Mammary epithelial cell (primary cell): ENCODE measurements at regions of chr17 and their contacts with region 1.

Region 1: GRCh38 chr17:78736526-78737079 is 45.5 kb downstream of the CYTH1 start:
- DNase-seq: peak; percentile 93
- H3K4me3 ChIP-seq: peak overlapping the region; percentile 56 to 76 (median 56)
- H3K27ac ChIP-seq: peak overlapping the region; percentile 91
- H3K4me1 ChIP-seq: peaks cover 25% of the 10 kb centered on the region
- H3K27me3 ChIP-seq: no peaks in the 10 kb centered on the region
- CTCF ChIP-seq: peak in 1 of 2 donors; percentile 41

Region 2: GRCh38 chr17:78798695-78799559 is 62.3 kb after region 1 on chr17:
- CTCF ChIA-PET with region 1: no interaction called
- dilution Hi-C with region 1: no loop called
- in situ Hi-C with region 1: no loop called
- intact Hi-C with region 1: loop called (anchors 2 kb)
- DNase-seq: peak; percentile 37
- H3K4me3 ChIP-seq: no peak overlapping the region
- H3K27ac ChIP-seq: no peak overlapping the region
- H3K4me1 ChIP-seq: peaks cover 41% of the 10 kb centered on the region
- H3K27me3 ChIP-seq: no peaks in the 10 kb centered on the region
- CTCF ChIP-seq: peak; percentile 12 to 48